Activated CD8-positive, alpha-beta T cell treated with anti-CD3 and anti-CD28 coated beads, Interleukin-2, amount 10 ng/mL, durations not matched to agents 7 days and 5 days (primary cell): ENCODE measurements at regions of chr10 and their contacts with region 1.

Region 1: DNA sequence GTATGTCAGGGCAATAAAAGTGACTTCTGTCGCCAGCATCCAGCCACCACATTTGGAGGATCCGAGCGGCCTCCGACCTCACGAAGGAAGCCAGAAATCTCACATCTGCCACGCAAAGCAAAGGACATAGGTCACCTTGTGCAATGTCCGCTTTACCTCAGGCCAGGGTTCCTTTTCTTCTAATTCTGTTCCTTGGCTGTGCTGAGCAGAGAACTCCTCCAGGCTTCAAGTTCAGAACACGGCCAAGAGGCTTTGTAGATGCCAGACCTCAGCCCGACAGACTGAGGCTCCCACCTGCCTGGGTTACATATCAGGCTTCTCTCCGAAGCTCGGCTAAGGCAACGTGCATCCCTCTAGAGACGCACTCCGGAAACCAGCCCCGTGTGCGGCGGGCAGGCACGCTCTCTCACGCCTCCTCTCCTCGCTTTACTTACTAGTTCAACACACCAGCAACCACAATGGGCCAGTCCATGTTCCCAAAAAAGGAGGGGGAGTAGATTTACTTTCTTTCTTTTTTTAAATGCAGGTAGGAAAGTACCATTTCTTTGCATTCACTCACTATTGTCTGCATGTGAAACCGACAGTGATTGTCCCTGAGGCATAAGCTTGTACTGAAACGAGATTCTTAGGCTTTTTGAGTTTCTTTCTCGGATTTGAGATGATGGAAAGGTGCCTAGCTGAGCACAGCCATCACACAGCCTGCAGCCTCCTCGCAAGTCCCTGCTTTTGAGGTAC is 122.4 kb upstream of the AFAP1L2 start:
- DNase-seq: peak; percentile 96
- ATAC-seq: peak; percentile 96
- H3K4me3 Mint-ChIP-seq: peak overlapping the region; percentile 84
- H3K27ac Mint-ChIP-seq: peak overlapping the region; percentile 94
- H3K4me1 Mint-ChIP-seq: peaks cover 68% of the 10 kb centered on the region
- H3K27me3 Mint-ChIP-seq: no peaks in the 10 kb centered on the region

Region 2: DNA sequence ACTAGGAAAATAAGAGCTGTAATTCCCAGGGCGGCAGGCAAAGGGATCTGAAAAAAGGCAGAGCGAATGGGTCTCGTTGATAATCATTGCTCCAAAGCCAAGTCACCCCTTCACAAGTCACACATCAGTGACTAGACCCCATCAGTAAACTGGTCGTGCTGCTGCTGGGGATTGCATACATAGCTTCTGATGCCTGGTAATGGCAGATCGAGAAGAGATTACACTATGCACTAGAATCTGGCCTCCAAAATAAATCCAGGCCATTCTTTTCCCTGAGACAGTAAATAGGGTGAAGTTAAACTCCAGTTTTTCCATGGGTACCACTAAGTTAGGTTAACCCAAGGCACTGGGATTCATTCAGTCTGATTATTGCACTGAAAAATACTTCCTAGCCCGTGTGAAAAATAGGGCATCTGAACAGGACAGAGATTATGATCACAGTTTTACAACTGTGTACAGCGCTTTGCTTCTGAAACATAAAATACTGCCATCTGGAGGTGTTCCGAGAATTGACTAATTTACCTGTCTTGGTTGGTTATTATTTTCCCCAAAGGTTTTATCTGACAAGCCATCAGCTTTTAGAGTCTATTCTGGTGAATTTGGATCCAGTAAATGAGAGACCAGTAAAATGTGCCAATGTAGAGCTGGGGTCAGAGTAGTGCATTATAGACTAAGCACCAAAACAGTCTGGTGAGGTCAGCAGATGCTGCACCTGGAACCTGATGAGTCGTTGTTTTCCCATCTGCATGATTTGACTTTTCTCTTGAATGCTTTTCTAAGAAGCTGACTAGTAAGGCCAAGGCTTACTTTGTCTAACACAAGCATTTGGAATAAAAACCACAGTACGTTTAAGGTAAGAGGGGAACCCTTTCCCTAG is 39.5 kb before region 1 on chr10:
- CTCF ChIA-PET with region 1: interaction called, 12 read pairs
- POLR2A ChIA-PET with region 1: interaction called, 7 read pairs
- DNase-seq: no peak
- ATAC-seq: no peak
- H3K4me3 Mint-ChIP-seq: no peak overlapping the region
- H3K27ac Mint-ChIP-seq: no peak overlapping the region
- H3K4me1 Mint-ChIP-seq: peaks cover 28% of the 10 kb centered on the region
- H3K27me3 Mint-ChIP-seq: no peaks in the 10 kb centered on the region

Region 3: GRCh38 chr10:114499630-114500190 is 27.0 kb before region 1 on chr10:
- CTCF ChIA-PET with region 1: interaction called, 149 read pairs
- POLR2A ChIA-PET with region 1: interaction called, 17 read pairs
- DNase-seq: peak; percentile 64
- ATAC-seq: peak; percentile 66
- H3K4me3 Mint-ChIP-seq: peak overlapping the region; percentile 56
- H3K27ac Mint-ChIP-seq: peak overlapping the region; percentile 89
- H3K4me1 Mint-ChIP-seq: peaks cover 80% of the 10 kb centered on the region
- H3K27me3 Mint-ChIP-seq: no peaks in the 10 kb centered on the region

Region 4: GRCh38 chr10:114515298-114515914 is 11.3 kb before region 1 on chr10:
- CTCF ChIA-PET with region 1: interaction called, 72 read pairs
- POLR2A ChIA-PET with region 1: interaction called, 18 read pairs
- DNase-seq: no peak
- ATAC-seq: no peak
- H3K4me3 Mint-ChIP-seq: no peak overlapping the region
- H3K27ac Mint-ChIP-seq: peak overlapping the region; percentile 1
- H3K4me1 Mint-ChIP-seq: peaks cover 90% of the 10 kb centered on the region
- H3K27me3 Mint-ChIP-seq: no peaks in the 10 kb centered on the region